ENCODE measurements at regions of chr1 and their contacts with region 1.

Region 1: DNA sequence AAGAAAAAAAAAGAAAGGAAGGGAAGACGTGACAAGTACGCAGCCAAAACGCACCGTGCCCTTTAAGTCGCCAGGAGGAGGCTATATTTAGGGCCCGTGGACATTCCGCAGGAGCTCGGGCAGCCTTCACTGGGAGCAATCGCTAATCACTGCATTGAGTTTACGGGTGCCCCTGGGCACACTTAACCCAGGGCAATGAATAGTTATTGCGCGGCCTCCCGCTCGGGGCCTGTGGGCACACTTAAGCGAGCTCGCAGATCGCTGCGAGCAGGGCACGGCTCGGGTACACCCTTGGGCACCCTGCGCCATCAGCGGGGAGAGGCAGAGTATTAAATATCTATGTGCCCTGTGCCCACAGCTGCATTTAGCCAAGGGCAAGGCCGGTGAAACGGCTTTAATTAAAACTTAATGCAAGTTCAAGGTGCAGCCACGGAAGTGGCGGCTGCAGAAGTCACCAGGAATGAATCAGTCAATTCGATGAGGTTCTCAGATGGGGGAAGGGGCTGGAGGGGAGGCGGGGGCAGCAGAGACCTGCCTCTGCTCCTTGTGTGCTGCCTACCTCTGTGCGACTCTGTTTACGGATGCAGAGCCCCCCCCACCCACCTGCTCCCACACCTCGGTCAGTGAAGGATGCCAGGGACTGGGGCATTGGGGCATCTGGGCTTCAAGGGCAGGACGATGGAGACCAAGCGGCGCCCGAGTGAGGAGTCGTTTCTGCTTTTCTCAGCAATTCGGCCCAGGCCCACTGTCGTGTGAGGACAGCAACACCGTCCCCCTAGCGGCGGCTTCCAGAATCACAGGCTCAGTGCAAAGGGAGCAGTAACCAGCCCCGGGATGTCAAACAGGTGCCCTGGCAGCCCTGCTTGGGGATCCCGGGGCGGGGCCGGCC is 51.8 kb upstream of the TARDBP start:
- DNase-seq: peak; percentile 80 to 99
- H3K4me3 ChIP-seq: peak overlapping the region in 2 of 4 experiments; percentile 10 to 34; a peak in 4 of 8 replicates
- H3K27ac ChIP-seq: no peak overlapping the region
- H3K4me1 ChIP-seq: peaks cover 0 to 11% (median 9%) of the 10 kb centered on the region in 4 experiments; a peak in 5 of 7 replicates
- H3K27me3 ChIP-seq: peaks cover 0 to 2% (median 0%) of the 10 kb centered on the region in 4 experiments; a peak in 1 of 7 replicates
- CTCF ChIP-seq: peak; percentile 87 to 95 (median 95)
- EP300 ChIP-seq: no peak
- POLR2A ChIP-seq: no peak
- RAD21 ChIP-seq: peak; percentile 63 to 80

Region 2: GRCh38 chr1:10612436-10613160 is 348.1 kb before region 1 on chr1:
- CTCF ChIA-PET with region 1: no interaction called
- POLR2A ChIA-PET with region 1: no interaction called
- DNase-seq: no peak
- H3K4me3 ChIP-seq: no peak overlapping the region
- H3K27ac ChIP-seq: no peak overlapping the region
- H3K4me1 ChIP-seq: peaks cover 0 to 11% (median 3%) of the 10 kb centered on the region in 4 experiments; a peak in 3 of 7 replicates
- H3K27me3 ChIP-seq: no peaks in the 10 kb centered on the region
- CTCF ChIP-seq: no peak
- EP300 ChIP-seq: no peak
- POLR2A ChIP-seq: no peak
- RAD21 ChIP-seq: no peak

Region 3: GRCh38 chr1:10835423-10836421 is 124.9 kb before region 1 on chr1:
- CTCF ChIA-PET with region 1: no interaction called
- POLR2A ChIA-PET with region 1: no interaction called
- DNase-seq: peak; percentile 87 to 97
- H3K4me3 ChIP-seq: peak overlapping the region in 2 of 4 experiments; percentile 12 to 50; a peak in 4 of 8 replicates
- H3K27ac ChIP-seq: no peak overlapping the region
- H3K4me1 ChIP-seq: peaks cover 0 to 34% (median 21%) of the 10 kb centered on the region in 4 experiments; a peak in 6 of 7 replicates
- H3K27me3 ChIP-seq: peaks cover 0 to 3% (median 1%) of the 10 kb centered on the region in 4 experiments; a peak in 3 of 7 replicates
- CTCF ChIP-seq: peak; percentile 35 to 57 (median 55); a peak in 3 of 4 replicates
- EP300 ChIP-seq: peak; percentile 29 to 87; a peak in 2 of 3 replicates
- POLR2A ChIP-seq: peak in 1 of 2 experiments; percentile 51; a peak in 1 of 3 replicates
- RAD21 ChIP-seq: peak; percentile 62 to 66

Region 4: GRCh38 chr1:10867138-10867721 is 93.4 kb before region 1 on chr1:
- CTCF ChIA-PET with region 1: no interaction called
- POLR2A ChIA-PET with region 1: no interaction called
- DNase-seq: peak in 1 of 2 experiments; percentile 90
- H3K4me3 ChIP-seq: peak overlapping the region; percentile 13 to 60 (median 23); a peak in 5 of 8 replicates
- H3K27ac ChIP-seq: no peak overlapping the region
- H3K4me1 ChIP-seq: peaks cover 2 to 14% (median 5%) of the 10 kb centered on the region in 4 experiments; a peak in 6 of 7 replicates
- H3K27me3 ChIP-seq: peaks cover 1 to 29% (median 9%) of the 10 kb centered on the region in 4 experiments; a peak in 6 of 7 replicates
- CTCF ChIP-seq: peak; percentile 56 to 76 (median 71)
- EP300 ChIP-seq: no peak
- POLR2A ChIP-seq: no peak
- RAD21 ChIP-seq: peak; percentile 44 to 85

Region 5: DNA sequence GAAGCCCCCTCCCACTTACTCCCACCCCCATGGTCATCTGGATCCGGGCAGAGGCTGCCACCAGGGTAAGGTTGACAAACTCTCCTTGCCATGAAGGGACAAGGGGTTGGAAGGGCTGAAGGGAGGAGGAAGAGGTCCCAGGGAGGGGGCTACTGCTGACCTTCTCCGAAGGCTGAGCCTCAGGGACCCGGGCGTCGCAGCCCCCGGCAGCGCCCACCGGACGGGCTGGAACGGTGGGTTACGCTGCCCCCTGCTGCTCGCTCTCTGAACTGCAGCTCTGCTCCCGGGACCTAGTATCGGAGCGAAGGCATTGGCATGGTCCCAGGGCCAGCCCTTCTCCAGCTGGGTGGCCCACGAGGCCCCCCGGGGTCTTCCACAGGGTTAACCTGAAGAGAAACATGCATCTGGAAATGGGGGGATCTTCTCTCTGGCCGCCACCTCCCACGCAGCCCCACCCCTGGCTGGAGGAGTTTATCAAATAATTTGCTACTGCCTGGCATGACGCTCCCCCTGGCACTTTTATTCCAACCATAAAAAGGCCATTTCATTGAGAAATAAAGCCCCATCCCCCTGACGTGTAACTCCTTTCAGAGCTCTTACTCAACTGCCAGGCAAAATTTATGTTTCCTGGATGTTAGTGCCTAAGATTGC is 18.6 kb before region 1 on chr1:
- CTCF ChIA-PET with region 1: interaction called, 29 read pairs
- POLR2A ChIA-PET with region 1: no interaction called
- DNase-seq: peak in 1 of 2 experiments; percentile 99
- H3K4me3 ChIP-seq: peak overlapping the region in 3 of 4 experiments; percentile 20 to 48 (median 32); a peak in 3 of 8 replicates
- H3K27ac ChIP-seq: no peak overlapping the region
- H3K4me1 ChIP-seq: peaks cover 0 to 5% (median 3%) of the 10 kb centered on the region in 4 experiments; a peak in 3 of 7 replicates
- H3K27me3 ChIP-seq: peaks cover 0 to 3% (median 0%) of the 10 kb centered on the region in 4 experiments; a peak in 2 of 7 replicates
- CTCF ChIP-seq: peak in 2 of 3 experiments; percentile 87 to 90; a peak in 3 of 4 replicates
- EP300 ChIP-seq: no peak
- POLR2A ChIP-seq: no peak
- RAD21 ChIP-seq: peak; percentile 89 to 94

Region 6: DNA sequence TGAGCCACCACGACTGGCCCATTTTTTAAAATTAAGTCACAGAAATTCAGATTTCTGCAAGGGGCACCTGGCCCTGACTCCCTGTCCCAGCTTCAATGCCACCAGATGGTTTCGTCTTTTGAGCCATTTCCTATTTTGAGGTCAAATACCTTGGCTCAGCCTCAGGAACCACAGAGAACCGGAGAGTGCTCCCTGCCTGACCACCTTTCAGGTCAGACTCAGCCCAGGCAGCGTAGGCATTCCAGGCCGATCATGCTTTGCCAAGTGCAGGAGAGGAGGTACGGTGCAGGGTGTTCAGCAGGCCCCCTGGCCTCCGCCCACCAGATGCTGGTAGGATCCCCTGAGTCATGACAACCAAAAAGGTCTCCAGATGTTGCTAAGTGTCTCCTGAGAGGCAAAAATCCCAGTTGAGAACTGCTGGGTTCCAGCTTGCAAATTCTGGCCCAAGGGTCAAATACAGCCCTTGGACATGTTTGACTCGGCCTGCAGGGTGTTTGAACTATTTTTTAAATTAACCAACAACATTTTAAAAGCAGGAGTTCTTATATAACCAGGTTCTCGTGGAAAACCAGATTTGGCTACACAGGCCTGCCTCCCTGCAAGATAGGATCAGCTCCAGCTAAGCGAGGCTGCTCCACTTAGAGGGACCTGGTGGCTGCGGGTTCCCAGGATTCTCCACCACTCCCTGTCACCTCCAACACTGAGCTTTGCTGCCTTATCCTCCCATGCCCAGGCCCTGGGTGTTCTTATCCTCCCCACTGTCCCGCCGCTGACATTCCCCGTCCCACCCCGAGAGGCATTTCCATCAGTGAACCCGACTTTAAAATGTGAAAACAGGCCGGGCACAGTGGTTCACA is 10.1 kb before region 1 on chr1:
- CTCF ChIA-PET with region 1: interaction called, 29 read pairs
- POLR2A ChIA-PET with region 1: no interaction called
- DNase-seq: no peak
- H3K4me3 ChIP-seq: no peak overlapping the region
- H3K27ac ChIP-seq: no peak overlapping the region
- H3K4me1 ChIP-seq: no peaks in the 10 kb centered on the region; a peak in 1 of 7 replicates
- H3K27me3 ChIP-seq: no peaks in the 10 kb centered on the region
- CTCF ChIP-seq: no peak
- EP300 ChIP-seq: no peak
- POLR2A ChIP-seq: no peak
- RAD21 ChIP-seq: no peak

Region 7: GRCh38 chr1:10980094-10980577 is 19.5 kb after region 1 on chr1:
- CTCF ChIA-PET with region 1: interaction called, 14 read pairs
- POLR2A ChIA-PET with region 1: no interaction called
- DNase-seq: peak; percentile 80 to 85
- H3K4me3 ChIP-seq: peak overlapping the region in 3 of 4 experiments; percentile 26 to 47 (median 47); a peak in 5 of 8 replicates
- H3K27ac ChIP-seq: peak overlapping the region; percentile 63; the same call in 1 of the 2 replicates
- H3K4me1 ChIP-seq: peaks cover 14 to 20% (median 16%) of the 10 kb centered on the region in 4 experiments
- H3K27me3 ChIP-seq: no peaks in the 10 kb centered on the region
- CTCF ChIP-seq: peak in 2 of 3 experiments; percentile 33 to 45; a peak in 3 of 4 replicates
- EP300 ChIP-seq: 0 out of 3 replicates have a peak, but pooled peaks of 1 of the 2 experiments have one; percentile 52
- POLR2A ChIP-seq: no peak
- RAD21 ChIP-seq: peak in 1 of 2 experiments; percentile 12; a peak in 1 of 4 replicates

Region 8: DNA sequence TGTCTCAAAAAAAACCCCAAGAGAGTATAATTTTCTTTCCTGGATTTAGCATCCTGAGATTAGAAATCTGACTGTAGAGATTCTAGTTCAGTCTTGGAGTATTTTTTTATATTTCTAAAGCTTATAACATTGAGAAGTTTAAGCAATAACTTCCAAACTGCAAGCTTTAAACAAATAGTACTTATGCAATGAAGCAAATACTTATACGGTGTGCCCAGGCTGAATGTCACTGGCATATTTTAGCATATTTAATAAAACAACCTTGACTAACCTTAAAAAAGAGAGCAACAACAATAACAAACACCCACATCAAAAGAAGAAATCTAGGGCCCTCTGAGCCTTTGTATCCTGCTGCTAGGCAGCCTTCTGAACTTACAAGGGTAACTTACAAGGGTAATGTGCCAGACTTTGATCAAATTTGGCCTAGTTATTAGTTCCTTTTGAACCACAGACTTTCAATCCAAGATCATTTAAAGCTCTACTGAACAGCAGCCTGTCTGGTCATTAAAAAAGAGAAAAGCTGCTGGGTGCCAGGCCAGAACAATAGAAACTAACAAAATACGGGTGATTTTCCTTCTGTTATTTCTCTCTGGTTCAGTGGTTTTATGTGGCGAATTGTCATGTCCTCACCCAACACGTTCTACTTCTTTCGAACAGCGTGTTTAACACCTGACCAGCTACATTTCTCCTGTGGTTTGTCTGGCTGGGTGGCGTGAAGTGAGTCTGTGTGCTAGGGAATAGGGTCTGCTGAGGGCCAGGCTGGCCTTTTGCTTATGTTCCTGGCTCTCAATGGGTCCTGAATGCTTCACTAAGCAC is 285.5 kb after region 1 on chr1:
- CTCF ChIA-PET with region 1: no interaction called
- POLR2A ChIA-PET with region 1: no interaction called
- DNase-seq: no peak
- H3K4me3 ChIP-seq: no peak overlapping the region
- H3K27ac ChIP-seq: no peak overlapping the region
- H3K4me1 ChIP-seq: no peaks in the 10 kb centered on the region
- H3K27me3 ChIP-seq: no peaks in the 10 kb centered on the region
- CTCF ChIP-seq: no peak
- EP300 ChIP-seq: no peak
- POLR2A ChIP-seq: no peak
- RAD21 ChIP-seq: no peak